ENCODE measurements at regions of chr16 and their contacts with region 1.

Region 1: GRCh38 chr16:14529010-14529669 is 100.9 kb downstream of the PARN start:
- DNase-seq: peak; percentile 55 to 81
- ATAC-seq: peak; percentile 79 to 90 (median 85)
- H3K4me3 ChIP-seq: peak overlapping the region in 7 of 10 donors; percentile 22 to 38 (median 24)
- H3K27ac ChIP-seq: peak overlapping the region in 6 of 10 donors; percentile 28 to 68 (median 53)
- H3K4me1 ChIP-seq: peaks cover 0 to 26% (median 11%) of the 10 kb centered on the region in 9 donors
- H3K27me3 ChIP-seq: no peaks in the 10 kb centered on the region
- CTCF ChIP-seq: peak; percentile 53 to 88 (median 76)

Region 2: GRCh38 chr16:14249291-14250032 is 279.7 kb before region 1 on chr16:
- intact Hi-C with region 1: loop called in 5 of 10 experiments (anchors 1 to 5 kb)
- DNase-seq: peak in 1 of 2 donors; percentile 43
- ATAC-seq: peak in 1 of 8 donors; percentile 14
- H3K4me3 ChIP-seq: no peak overlapping the region
- H3K27ac ChIP-seq: no peak overlapping the region
- H3K4me1 ChIP-seq: no peaks in the 10 kb centered on the region
- H3K27me3 ChIP-seq: no peaks in the 10 kb centered on the region
- CTCF ChIP-seq: peak; percentile 62 to 89 (median 79)

Region 3: DNA sequence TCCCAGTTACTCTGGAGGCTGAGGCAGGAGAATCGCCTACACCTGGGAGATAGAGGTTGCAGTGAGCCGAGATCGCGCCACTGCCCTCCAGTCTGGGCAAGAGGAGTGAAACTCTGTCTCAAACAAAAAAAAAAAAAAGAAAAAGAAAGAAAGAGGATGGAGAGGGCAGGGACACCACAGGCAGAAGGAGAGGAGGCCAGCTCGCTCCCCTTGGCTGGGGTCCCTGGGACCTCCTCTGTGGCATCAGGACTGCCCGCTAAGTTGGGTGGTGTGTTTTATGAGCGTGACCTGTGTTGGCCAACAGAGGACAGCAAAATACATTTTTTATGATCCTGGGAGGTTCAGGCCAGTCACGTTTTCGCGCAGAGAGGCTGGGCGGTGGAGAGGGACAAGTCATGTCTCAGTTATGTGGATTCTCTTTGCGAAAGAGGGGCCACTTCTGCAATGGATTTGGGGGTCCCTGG is 228.4 kb before region 1 on chr16:
- intact Hi-C with region 1: loop called (anchors 1 to 5 kb)
- DNase-seq: peak; percentile 56 to 78
- ATAC-seq: peak; percentile 66 to 89 (median 78)
- H3K4me3 ChIP-seq: peak overlapping the region in 9 of 10 donors; percentile 47 to 99 (median 87)
- H3K27ac ChIP-seq: peak overlapping the region in 8 of 10 donors; percentile 70 to 92 (median 82)
- H3K4me1 ChIP-seq: peaks cover 0 to 31% (median 19%) of the 10 kb centered on the region in 9 donors
- H3K27me3 ChIP-seq: peaks cover 0 to 49% (median 0%) of the 10 kb centered on the region in 7 donors
- CTCF ChIP-seq: peak; percentile 14 to 72 (median 61)

Region 4: DNA sequence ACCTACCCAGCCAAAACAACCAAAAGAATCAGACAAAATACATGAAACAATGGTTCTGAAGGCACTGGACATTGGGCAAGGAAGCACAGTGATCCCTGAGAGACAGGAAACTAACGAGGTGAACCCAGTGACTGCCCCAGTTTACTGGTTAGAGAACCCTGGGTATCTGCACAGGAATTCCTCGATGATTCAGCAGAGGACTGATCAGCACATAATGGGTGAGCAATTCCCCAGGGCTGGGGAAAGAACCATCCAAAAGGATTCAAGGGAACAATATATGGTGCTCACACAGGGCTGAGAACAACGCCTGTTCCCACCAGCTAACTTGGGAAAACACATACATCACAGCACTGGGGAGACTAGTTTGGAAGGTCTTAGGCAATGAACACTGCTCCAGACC is 66.3 kb before region 1 on chr16:
- intact Hi-C with region 1: loop called in 1 of 10 experiments (anchors 10 kb)
- DNase-seq: no peak
- ATAC-seq: no peak
- H3K4me3 ChIP-seq: no peak overlapping the region
- H3K27ac ChIP-seq: no peak overlapping the region
- H3K4me1 ChIP-seq: peaks cover 0 to 9% (median 0%) of the 10 kb centered on the region in 9 donors
- H3K27me3 ChIP-seq: no peaks in the 10 kb centered on the region
- CTCF ChIP-seq: no peak

Measured in heart right ventricle (tissue), 16 donors.